Activated CD4-positive, alpha-beta T cell treated with anti-CD3 and anti-CD28 coated beads, Interleukin-2, amount 10 ng/mL, durations not matched to agents 24 days and 14 days (primary cell): ENCODE measurements at regions of chr9 and their contacts with region 1.

Region 1: DNA sequence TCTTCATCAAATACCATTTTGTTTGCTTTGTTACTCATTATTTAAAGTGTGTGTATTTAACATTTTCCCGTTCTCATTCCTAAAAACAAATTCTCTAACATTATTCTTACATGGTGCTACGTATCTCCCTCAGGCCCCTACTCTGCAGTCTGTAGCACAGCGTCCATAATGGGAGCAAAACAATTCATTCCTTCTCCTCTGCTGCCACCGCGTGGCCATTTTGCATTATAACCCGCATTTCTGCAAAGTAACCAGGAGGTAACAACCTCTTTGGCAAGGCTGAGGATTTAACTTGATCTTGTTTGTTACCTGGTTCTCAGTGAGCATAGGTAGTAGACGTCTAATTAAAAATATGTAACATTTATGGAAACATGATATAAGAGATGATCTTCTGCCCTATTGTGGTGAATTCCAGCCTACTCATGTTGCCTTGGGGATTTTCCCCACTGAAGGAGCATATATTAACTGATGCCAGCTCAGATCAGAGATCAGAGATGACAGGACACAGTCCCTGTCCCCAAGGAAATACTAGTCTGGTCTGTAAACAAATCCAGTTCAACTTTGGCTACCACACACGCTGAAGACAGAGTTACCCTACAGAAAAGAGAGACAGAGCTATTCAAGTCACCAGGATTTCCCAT is 10.5 kb downstream of the OR1K1 start:
- DNase-seq: peak; percentile 91
- H3K4me3 Mint-ChIP-seq: no peak overlapping the region
- H3K27ac Mint-ChIP-seq: no peak overlapping the region
- H3K4me1 Mint-ChIP-seq: peaks cover 23% of the 10 kb centered on the region
- H3K27me3 Mint-ChIP-seq: no peaks in the 10 kb centered on the region

Region 2: GRCh38 chr9:122051351-122052321 is 758.8 kb before region 1 on chr9:
- intact Hi-C with region 1: loop called (anchors 1 kb)
- DNase-seq: no peak
- H3K4me3 Mint-ChIP-seq: peak overlapping the region; percentile 12
- H3K27ac Mint-ChIP-seq: peak overlapping the region; percentile 71
- H3K4me1 Mint-ChIP-seq: peaks cover 7% of the 10 kb centered on the region
- H3K27me3 Mint-ChIP-seq: peaks cover 3% of the 10 kb centered on the region

Region 3: GRCh38 chr9:122125158-122125508 is 685.3 kb before region 1 on chr9:
- intact Hi-C with region 1: loop called (anchors 1 kb)
- DNase-seq: peak; percentile 93
- H3K4me3 Mint-ChIP-seq: no peak overlapping the region
- H3K27ac Mint-ChIP-seq: no peak overlapping the region
- H3K4me1 Mint-ChIP-seq: peaks cover 16% of the 10 kb centered on the region
- H3K27me3 Mint-ChIP-seq: peaks cover 40% of the 10 kb centered on the region

Region 4: DNA sequence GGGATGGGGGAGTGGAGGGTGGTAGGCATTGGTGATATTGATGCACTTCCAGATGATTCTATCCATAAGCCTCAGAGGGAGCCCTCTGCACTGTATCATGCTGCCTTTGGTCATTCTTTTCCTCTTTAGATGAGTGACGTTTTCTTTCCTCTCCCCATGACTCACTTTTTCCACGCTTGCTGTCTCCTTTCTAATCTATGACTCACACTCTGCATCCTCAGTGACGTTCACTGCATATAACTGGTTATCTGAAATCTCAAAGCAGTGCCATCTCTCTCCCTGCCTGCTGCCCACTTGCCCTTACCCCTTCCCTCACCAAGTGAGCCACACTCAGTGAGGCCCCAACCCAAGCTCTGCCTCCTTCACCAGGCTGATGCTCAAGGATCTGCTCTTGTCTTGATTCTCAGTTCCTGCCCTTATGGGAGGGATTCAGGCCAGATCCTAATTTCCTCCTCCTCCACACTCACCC is 408.0 kb before region 1 on chr9:
- intact Hi-C with region 1: loop called (anchors 1 kb)
- DNase-seq: peak; percentile 82
- H3K4me3 Mint-ChIP-seq: peak overlapping the region; percentile 3
- H3K27ac Mint-ChIP-seq: peak overlapping the region; percentile 91
- H3K4me1 Mint-ChIP-seq: peaks cover 23% of the 10 kb centered on the region
- H3K27me3 Mint-ChIP-seq: peaks cover 2% of the 10 kb centered on the region

Region 5: DNA sequence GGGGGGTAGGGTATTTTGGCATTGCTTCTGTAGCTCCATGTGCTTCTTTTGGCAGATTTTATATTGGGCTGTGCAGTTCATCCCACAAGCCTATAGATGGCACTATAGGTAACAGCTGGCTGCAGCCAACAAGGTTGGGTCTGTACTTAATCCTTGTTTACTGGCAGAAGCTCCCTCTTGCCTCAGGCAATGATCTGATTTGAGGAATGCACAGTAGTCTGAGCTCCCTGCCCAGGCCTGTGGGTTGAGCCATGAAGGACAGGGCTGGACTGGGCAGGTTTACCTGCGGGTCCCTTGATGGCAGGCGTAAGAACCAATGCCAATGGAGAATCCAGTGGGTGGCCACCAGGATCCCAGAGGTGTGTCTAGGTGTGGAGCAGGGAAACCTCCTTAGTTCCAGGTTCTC is 311.5 kb before region 1 on chr9:
- intact Hi-C with region 1: loop called (anchors 10 kb)
- DNase-seq: peak; percentile 75
- H3K4me3 Mint-ChIP-seq: no peak overlapping the region
- H3K27ac Mint-ChIP-seq: no peak overlapping the region
- H3K4me1 Mint-ChIP-seq: no peaks in the 10 kb centered on the region
- H3K27me3 Mint-ChIP-seq: peaks cover 19% of the 10 kb centered on the region

Region 6: DNA sequence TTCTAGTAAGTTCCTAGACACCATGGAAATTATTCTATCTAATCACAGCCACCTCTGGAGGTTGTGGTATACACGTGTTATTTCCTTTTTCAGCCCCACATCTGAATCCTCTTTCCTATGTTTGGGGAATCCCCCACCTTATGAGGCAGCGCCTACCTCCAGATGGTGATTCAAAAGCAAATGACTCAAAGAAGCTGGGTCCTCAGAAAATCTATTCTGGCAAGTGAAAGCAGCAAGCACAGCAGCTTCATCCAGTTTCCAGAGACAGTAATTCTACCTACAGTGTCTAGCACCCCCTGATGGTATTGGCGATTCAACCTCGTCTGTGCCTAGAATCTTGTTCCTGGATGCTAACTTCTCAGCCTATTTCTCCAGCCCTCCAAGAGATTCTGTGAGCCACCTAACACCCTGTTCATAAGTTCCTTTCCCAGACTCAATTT is 415.0 kb after region 1 on chr9:
- intact Hi-C with region 1: loop called (anchors 1 kb)
- DNase-seq: peak; percentile 85
- H3K4me3 Mint-ChIP-seq: peak overlapping the region; percentile 54
- H3K27ac Mint-ChIP-seq: peak overlapping the region; percentile 78
- H3K4me1 Mint-ChIP-seq: peaks cover 21% of the 10 kb centered on the region
- H3K27me3 Mint-ChIP-seq: peaks cover 2% of the 10 kb centered on the region

Region 7: DNA sequence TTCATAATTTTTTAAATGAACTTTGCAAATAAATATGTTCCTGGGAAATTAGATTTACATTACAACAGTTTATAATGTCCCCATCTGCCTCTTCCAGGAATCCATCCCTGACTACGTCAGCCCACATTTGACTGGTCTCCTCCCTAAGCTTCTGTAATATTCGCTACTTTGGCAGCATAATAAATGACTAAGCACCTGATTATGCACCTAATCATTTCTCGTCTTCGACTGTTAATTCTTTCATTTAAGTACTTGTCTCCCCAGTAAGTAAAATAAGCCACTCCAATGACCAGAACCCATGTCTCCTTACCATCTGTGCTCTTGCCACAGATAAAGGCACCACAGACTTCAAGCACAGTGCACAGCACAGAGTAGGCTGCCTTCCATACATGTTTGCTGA is 996.8 kb after region 1 on chr9:
- intact Hi-C with region 1: no loop called
- DNase-seq: no peak
- H3K4me3 Mint-ChIP-seq: no peak overlapping the region
- H3K27ac Mint-ChIP-seq: no peak overlapping the region
- H3K4me1 Mint-ChIP-seq: no peaks in the 10 kb centered on the region
- H3K27me3 Mint-ChIP-seq: no peaks in the 10 kb centered on the region